ENCODE measurements at regions of chr13 and their contacts with region 1.

Region 1: DNA sequence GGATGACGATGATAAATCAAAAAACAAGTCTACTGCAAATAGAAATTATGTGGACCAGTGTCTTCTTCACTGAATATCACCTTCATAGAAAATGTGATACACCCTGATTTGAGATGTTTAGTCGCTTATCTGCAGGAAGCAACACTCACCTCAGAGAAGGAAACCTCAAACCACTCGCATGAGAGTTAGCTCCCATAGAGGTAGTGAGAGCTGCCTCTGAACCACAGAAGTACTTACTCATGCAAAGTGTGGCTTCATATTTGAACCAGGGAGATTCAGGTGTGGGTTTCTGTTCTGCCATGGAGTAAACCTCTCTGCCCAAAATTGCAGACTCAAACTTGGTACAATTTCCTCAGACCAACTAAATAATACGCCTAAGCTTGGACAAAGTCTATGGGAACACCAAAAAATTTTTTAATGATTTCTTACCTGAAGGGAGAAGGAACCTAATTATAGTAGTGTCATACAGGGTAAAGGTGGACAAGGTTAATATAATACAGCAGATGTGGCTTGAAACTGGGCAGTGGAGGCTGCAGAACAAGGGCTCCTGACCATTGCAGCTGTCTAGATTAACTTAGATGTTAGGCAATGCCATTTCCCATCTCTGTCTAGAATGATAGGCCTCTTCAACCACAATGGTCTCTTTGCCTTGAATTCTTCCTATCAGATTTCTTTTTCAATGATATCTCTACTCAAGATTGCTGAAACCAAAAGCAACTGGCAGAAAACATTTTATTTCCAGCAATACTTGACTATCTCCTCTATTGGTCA is 29.6 kb upstream of the RCBTB2 start:
- DNase-seq: no peak

Region 2: GRCh38 chr13:48492470-48493065 is 69.9 kb before region 1 on chr13:
- in situ Hi-C with region 1: loop called (anchors 10 kb)
- DNase-seq: peak; percentile 56